ENCODE measurements at regions of chr3 and their contacts with region 1.

Region 1: DNA sequence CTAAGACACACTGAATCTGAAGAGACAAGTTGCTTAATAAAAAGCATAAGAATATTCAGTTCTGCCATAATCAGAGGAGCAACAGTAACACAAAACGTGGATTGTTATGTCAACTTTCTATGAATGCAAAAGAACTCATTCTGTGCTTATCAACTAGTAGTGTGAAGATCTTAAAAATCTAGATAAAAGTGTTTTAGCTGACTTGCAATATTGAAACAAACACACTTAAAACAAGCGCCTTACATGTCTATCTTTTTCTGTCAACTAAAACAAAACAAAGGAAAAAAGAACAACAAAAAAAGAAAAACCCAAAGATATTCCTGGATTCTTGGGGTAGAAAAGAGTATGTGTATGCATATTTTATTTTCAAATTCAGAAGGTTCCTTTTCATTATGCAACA is 37.7 kb downstream of the TASOR start:
- DNase-seq: no peak
- H3K4me3 ChIP-seq: no peak overlapping the region
- H3K27ac ChIP-seq: no peak overlapping the region
- H3K4me1 ChIP-seq: no peaks in the 10 kb centered on the region
- H3K27me3 ChIP-seq: no peaks in the 10 kb centered on the region
- CTCF ChIP-seq: no peak

Region 2: DNA sequence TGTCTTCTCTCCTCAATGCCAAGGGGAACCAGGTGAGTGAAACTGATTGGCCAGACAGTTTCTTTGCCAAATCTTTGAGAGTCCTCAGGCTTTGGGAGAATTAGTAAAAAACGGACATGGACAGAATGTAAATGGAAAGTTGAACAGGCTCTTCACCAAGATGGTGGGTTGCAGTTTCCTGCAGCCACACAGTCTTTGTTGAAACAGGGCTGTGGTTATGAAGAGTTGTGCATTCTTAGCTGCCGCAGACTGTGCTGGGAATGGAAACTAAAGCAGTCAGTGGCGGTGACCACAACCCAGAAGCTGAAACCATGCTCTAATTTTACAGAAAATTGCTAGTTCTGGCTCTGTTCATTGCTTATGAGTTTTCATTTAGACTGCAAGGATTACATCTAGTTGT is 79.8 kb after region 1 on chr3:
- CTCF ChIA-PET with region 1: no interaction called
- POLR2A ChIA-PET with region 1: interaction called, 11 read pairs
- intact Hi-C with region 1: no loop called
- DNase-seq: no peak
- H3K4me3 ChIP-seq: no peak overlapping the region
- H3K27ac ChIP-seq: no peak overlapping the region
- H3K4me1 ChIP-seq: no peaks in the 10 kb centered on the region
- H3K27me3 ChIP-seq: no peaks in the 10 kb centered on the region
- CTCF ChIP-seq: no peak